GM13977 (cell line): ENCODE measurements at regions of chr19 and their contacts with region 1.

Region 1: DNA sequence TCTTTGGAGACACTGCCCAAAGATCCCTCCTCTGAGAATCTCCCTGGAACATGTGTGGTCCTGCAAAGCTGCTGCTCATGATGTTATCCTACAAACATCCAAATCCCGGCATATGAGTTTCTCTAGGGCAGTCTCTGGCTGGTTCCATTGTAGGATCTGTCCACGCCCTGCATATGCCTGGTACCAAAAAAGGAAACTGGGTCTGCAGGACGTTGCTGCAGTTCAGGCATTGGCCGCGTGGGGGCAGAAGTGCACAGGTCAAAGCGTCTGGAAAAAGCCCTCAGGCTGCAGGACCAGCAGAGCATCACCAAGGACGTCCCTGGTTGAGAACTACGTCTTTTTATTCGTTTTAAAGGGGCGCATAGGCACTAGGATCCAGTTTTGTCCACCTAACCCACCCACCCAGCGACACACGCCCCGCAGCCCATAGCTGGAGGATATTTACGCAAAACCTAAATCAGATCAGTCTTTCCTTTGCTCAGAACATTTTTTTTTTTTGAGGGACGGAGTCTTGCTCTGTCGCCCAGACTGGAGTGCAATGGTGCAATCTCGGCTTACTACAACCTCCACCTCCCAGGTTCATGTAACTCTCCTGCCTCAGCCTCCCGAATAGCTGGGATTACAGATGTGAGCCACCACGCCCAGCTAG is 12.9 kb upstream of the ZNF564 start:
- DNase-seq: peak; percentile 93
- CTCF ChIP-seq: peak; percentile 99

Region 2: DNA sequence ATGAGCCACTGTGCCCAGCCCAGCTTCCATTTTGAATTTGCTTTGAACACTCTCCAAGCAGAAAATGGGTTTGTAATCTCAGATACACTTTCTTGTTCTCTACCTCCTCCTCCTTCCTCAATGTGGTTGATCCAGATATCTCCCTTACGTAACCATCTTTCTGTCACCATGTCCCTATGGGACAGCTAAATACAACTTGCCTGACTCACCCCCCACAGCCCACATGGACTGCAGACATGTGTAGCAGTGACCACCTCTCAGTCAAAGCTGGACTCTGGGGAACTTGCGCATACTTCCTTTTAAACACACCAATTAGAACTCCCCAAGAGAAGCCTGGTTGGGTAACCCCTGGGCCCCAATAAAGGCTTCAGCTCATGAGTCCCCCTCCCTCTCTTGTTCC is 152.2 kb before region 1 on chr19:
- in situ Hi-C with region 1: no loop called
- DNase-seq: no peak
- CTCF ChIP-seq: no peak

Region 3: DNA sequence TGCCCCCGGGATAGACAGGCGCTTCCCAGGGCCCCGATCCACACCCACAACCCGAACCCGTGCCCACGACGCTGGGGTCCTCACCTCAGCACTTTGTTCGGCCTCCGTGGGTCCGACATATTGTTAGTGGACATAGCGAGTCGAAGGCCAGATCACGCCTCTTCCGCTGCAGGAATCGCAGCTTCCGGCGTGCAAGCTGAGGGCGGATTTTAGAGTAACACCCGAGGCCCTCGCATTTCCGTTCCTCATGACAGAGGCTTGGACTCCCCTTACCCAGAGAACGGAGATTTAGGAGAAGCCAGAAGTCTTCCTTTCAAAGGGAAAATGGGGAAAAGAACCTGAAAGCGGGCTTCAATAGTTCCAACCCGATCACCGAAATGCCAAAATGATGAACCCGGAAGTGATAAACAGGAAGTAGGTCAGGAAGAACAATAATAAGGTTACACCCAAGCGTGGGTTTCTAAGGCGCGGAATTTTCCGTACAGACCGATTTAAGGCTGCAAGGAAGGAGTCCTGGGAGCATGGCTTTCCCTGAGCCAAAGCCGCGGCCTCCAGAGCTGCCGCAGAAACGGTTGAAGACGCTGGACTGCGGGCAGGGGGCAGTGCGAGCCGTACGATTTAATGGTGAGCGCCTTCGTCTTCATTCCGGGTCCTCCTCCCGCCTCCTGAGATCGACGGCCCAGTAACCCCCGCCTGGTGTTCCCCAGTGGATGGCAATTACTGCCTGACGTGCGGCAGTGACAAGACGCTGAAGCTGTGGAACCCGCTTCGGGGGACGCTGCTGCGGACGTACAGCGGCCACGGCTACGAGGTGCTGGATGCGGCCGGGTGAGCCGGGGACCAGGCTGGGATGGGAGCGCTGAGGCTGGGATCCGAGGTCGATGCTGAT is 105.4 kb after region 1 on chr19:
- in situ Hi-C with region 1: loop called (anchors 10 kb)
- DNase-seq: peak; percentile 84
- CTCF ChIP-seq: no peak

Region 4: DNA sequence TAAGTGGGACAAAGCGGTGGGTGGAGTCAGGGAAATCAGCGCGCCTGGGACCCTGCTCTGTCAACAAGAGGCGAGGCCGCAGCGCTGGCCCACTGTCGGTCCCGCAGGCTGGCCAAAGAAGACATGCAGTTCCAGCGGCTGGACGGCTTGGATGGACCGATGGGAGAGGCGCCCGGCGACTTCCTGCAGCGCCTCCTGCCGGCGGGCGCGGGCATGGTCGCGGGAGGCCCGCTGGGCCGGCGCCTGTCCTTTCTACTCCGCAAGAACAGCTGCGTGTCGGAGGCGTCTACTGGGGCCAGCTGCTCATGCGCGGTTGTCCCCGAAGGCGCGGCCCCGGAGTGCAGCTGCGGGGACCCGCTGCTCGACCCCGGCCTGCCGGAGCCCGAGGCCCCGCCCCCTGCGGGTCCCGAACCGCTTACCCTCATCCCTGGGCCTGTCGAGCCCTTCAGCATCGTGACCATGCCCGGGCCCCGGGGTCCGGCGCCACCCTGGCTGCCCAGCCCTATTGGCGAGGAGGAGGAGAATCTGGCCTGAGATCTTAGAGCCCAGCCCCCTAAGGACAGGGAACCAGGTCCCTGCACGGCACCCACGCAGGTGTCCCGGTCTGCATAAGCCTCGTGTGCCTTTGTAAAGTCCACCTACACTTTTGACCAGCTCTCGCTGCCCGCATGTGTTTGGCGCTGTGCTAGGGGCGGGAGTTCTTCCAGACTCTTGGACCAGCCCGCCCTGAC is 193.6 kb after region 1 on chr19:
- in situ Hi-C with region 1: loop called (anchors 10 kb)
- DNase-seq: peak; percentile 88
- CTCF ChIP-seq: peak; percentile 92